Activated B cell treated with CpG ODN at 0.5 μM for 24 hours (primary cell): ENCODE measurements at regions of chr1 and their contacts with region 1.

Region 1: GRCh38 chr1:92994105-92994712 is 32.9 kb upstream of the DIPK1A start:
- DNase-seq: no peak
- ATAC-seq: peak; percentile 99
- H3K4me3 Mint-ChIP-seq: no peak overlapping the region
- H3K27ac Mint-ChIP-seq: peak overlapping the region; percentile 10
- H3K4me1 Mint-ChIP-seq: peaks cover 38% of the 10 kb centered on the region
- H3K27me3 Mint-ChIP-seq: no peaks in the 10 kb centered on the region
- CTCF ChIP-seq: no peak

Region 2: DNA sequence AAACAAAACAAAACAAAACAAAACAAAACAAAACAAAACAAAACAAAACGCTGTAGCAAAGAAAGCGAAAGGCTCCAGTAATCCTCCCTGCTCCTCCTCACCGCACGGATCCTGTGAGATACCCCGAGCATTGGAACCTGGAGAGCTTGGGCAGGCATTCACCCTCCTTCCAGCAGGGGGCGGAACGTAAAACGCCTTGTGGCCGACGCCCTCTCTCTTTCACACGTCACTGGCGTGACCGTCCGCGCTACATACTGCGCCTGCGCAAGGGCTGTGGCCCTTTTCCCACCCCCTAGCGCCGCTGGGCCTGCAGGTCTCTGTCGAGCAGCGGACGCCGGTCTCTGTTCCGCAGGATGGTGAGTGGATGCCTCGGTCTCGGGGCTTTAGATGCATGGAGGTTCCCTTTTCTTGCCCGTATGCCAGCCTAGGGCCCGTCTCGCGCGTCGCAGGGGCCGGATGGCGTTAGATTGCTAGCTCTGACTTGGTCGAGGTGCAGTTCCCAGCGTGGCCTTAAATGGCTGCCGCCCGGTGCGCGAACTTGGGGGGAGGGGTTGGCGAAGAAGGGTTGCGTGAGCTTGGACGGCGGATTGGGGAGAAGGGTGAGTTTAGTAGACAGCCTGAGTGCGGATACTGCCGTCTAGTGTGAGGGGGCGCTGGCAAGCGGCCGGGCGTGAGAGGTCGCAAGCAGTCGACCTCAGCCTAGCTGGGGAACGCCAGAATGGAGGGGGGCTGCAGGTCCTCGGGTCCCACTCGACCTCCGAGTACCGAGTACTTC is 162.3 kb before region 1 on chr1 and contains the start of gene RPL5:
- CTCF ChIA-PET with region 1: interaction called, 12 read pairs
- POLR2A ChIA-PET with region 1: interaction called, 5 read pairs
- intact Hi-C with region 1: no loop called
- DNase-seq: peak; percentile 98
- ATAC-seq: peak; percentile 90
- H3K4me3 Mint-ChIP-seq: peak within 1 kb of the TSS; percentile 99
- H3K27ac Mint-ChIP-seq: peak within 1 kb of the TSS; percentile 97
- H3K4me1 Mint-ChIP-seq: peaks cover 48% of the 10 kb centered on the region
- H3K27me3 Mint-ChIP-seq: no peaks in the 10 kb centered on the region
- CTCF ChIP-seq: no peak
- total RNA-seq, gene RPL5: 1,685 and 1,766 TPM in 2 replicates

Region 3: GRCh38 chr1:92901699-92902405 is 92.4 kb before region 1 on chr1:
- CTCF ChIA-PET with region 1: interaction called, 11 read pairs
- POLR2A ChIA-PET with region 1: no interaction called
- intact Hi-C with region 1: no loop called
- DNase-seq: no peak
- ATAC-seq: no peak
- H3K4me3 Mint-ChIP-seq: no peak overlapping the region
- H3K27ac Mint-ChIP-seq: no peak overlapping the region
- H3K4me1 Mint-ChIP-seq: peaks cover 61% of the 10 kb centered on the region
- H3K27me3 Mint-ChIP-seq: no peaks in the 10 kb centered on the region
- CTCF ChIP-seq: no peak

Region 4: DNA sequence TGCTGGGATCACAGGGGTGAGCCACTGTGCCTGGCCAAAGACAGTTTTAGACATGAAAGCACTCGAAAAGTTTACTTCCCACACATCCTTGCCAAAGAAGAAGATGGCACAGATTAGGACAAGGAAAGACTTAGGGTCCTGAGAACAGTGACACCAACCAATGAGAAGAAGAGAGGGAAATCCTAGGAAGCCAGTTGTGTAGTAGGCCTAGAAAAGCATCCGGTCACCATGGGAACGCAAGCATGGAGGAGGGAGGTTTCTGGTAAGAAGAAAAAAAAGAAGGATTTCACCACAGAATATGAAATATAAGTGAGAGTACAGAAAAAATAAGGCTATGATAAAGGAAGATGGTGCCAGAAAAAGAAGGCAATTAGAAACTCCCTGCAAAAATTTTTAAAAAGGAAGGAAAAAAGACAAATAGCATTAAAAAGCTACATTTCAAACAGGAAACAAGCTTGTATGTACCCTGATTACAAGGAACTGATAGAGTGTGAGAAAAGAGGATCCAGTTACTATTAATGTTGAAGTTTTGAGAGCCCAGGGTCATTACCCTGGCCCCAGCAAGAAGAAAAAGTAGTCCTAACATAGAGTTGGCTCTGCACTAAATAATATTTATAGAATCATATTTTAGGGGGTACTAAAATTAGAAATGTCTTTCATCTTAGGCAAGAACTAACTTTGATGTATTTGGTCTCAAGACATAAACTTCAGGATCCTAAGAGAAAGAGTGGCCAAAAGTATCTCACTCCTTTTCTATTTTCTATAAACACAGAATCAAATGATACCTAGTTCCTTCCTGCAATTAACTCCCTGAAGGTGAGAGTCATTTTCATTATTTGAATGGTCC is 49.1 kb before region 1 on chr1:
- CTCF ChIA-PET with region 1: interaction called, 21 read pairs
- POLR2A ChIA-PET with region 1: no interaction called
- intact Hi-C with region 1: loop called (anchors 5 kb)
- DNase-seq: no peak
- ATAC-seq: peak; percentile 75
- H3K4me3 Mint-ChIP-seq: peak overlapping the region; percentile 66
- H3K27ac Mint-ChIP-seq: peak overlapping the region; percentile 80
- H3K4me1 Mint-ChIP-seq: peaks cover 75% of the 10 kb centered on the region
- H3K27me3 Mint-ChIP-seq: no peaks in the 10 kb centered on the region
- CTCF ChIP-seq: no peak

Region 5: DNA sequence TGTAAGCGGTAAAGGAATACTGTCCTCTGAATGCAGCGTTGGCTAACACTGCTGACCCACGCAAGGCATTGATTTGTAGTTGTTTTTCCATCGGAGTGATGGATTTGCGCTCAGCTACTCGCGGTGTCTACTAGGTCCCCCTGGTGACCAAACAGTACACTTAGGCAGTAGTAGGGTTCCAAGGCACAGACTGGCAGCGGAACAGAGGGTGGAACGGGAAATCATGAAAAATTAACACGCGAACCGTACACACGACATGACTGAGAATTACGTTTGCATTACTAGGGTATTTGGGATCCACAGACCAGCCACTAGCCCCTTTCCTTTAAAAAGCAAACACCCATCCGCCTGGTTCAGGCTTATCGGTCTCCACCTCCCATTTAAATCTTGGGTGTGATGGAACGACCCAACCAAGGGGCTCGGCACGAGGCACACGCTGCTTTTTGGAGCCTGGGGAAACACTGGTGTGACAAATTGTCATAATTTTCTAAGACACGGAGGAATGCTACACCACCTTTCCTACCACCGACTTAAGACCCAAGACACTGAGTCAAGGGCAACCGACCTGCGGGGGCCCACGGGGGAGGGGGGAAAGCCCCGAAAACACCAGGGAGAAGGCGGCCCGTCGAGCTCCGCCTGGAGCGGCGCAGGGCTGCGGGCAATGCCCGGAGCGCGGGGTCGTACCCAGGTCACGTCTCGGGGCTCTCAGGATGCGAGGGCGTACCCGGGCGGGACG is 33.6 kb before region 1 on chr1:
- CTCF ChIA-PET with region 1: interaction called, 251 read pairs
- POLR2A ChIA-PET with region 1: interaction called, 94 read pairs
- intact Hi-C with region 1: loop called (anchors 1 kb)
- DNase-seq: no peak
- ATAC-seq: peak; percentile 49
- H3K4me3 Mint-ChIP-seq: peak overlapping the region; percentile 96
- H3K27ac Mint-ChIP-seq: peak overlapping the region; percentile 98
- H3K4me1 Mint-ChIP-seq: peaks cover 46% of the 10 kb centered on the region
- H3K27me3 Mint-ChIP-seq: no peaks in the 10 kb centered on the region
- CTCF ChIP-seq: no peak

Region 6: GRCh38 chr1:92975551-92976232 is 18.5 kb before region 1 on chr1:
- CTCF ChIA-PET with region 1: interaction called, 251 read pairs
- POLR2A ChIA-PET with region 1: interaction called, 25 read pairs
- intact Hi-C with region 1: no loop called
- DNase-seq: peak; percentile 48
- ATAC-seq: peak; percentile 73
- H3K4me3 Mint-ChIP-seq: peak overlapping the region; percentile 67
- H3K27ac Mint-ChIP-seq: peak overlapping the region; percentile 99
- H3K4me1 Mint-ChIP-seq: peaks cover 91% of the 10 kb centered on the region
- H3K27me3 Mint-ChIP-seq: no peaks in the 10 kb centered on the region
- CTCF ChIP-seq: no peak

Region 7: DNA sequence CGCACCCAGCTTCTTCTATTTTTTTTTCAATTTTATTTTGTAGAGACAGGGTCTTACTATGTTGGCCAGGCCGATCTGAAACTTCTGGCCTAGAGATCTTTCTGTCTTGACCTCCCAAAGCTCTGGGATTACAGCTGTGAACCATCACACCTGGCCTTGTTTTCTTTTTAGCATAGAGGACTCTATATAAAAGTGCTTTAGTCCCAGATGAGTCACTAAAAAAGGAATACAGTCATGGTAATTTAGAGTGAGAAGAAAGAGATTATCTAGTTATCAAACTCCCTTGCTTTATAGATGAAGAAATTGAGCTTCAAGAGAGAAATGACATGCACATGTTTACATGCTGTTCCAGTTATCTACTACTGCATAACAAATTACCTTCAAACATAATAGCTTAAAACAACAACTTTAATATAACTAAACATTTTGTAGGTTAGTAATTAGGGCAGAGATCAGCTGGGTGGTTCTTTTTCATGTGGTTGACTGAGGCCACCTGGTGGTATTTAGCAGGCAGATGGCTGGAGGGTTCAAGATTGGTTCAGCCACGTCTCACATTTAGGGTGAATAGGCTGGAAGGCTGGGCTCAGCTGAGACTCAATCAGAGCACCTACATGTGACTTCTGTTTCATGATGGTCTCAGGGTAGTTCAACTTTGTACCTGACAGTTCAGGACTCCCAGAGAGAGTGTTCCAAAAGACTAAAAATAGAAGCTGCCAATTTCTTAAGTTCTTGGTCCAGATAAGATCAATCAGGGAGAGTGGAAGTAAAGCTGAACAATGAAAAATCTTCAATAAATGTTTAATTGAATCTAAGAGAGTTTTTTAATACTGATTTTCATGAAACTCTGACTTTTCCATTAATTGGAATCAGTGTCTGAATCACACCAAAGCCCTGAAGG is 67.9 kb after region 1 on chr1:
- CTCF ChIA-PET with region 1: interaction called, 16 read pairs
- POLR2A ChIA-PET with region 1: interaction called, 4 read pairs
- intact Hi-C with region 1: no loop called
- DNase-seq: no peak
- ATAC-seq: peak; percentile 82
- H3K4me3 Mint-ChIP-seq: no peak overlapping the region
- H3K27ac Mint-ChIP-seq: no peak overlapping the region
- H3K4me1 Mint-ChIP-seq: no peaks in the 10 kb centered on the region
- H3K27me3 Mint-ChIP-seq: peaks cover 13% of the 10 kb centered on the region
- CTCF ChIP-seq: no peak